ENCODE measurements at regions of chr9 and their contacts with region 1.

Region 1: DNA sequence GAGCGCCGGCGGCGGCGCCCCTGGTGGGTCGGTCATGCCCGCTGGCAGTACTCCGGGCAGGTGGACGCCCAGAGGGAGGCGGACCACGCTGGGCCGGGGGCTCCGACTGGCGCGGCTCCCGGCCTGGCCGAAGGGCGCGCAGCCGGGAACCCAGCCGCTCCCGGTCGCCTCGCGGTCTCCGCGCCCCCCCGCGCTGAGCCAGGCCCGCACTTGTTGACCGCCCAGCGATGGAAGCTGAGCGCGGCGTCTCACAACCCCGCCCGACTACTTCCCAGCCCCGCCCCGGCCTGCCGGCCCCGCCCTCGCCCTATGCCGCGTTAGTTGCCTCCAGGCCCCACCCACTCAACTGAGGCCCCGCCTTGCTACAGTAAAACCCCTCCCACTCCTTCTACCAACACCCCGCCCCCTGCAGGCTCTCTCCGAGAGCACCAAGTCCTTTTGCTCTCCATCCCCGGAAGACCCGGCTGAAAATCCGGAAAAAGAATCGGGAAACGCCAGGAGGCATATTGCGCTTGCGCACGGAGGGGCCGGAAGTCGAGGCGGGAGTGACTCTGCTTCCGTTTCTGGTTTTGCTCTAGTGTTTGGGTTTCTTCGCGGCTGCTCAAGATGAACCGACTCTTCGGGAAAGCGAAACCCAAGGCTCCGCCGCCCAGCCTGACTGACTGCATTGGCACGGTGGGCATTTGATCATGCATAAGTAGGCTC is at the starts of genes BAG1 and CHMP5:
- DNase-seq: peak; percentile 99 to 100 (median 100)
- H3K4me3 ChIP-seq: peak within 1 kb of the TSS; percentile 71 to 85
- H3K4me3 Mint-ChIP-seq: peak within 1 kb of the TSS; percentile 95 to 100 (median 97)
- H3K27ac ChIP-seq: peak within 1 kb of the TSS; percentile 76
- H3K27ac Mint-ChIP-seq: peak within 1 kb of the TSS; percentile 90 to 99 (median 98)
- H3K4me1 ChIP-seq: peaks cover 38% of the 10 kb centered on the region
- H3K4me1 Mint-ChIP-seq: peaks cover 38 to 53% (median 44%) of the 10 kb centered on the region in 4 donors
- H3K27me3 ChIP-seq: no peaks in the 10 kb centered on the region
- H3K27me3 Mint-ChIP-seq: no peaks in the 10 kb centered on the region
- total RNA-seq, gene BAG1: 53.5 to 56.3 TPM
- total RNA-seq, gene CHMP5: 32.3 to 35.0 TPM

Region 2: GRCh38 chr9:32550562-32551433 is 713.8 kb before region 1 on chr9:
- CTCF ChIA-PET with region 1: no interaction called
- POLR2A ChIA-PET with region 1: no interaction called
- intact Hi-C with region 1: loop called (anchors 2 kb)
- DNase-seq: peak; percentile 95 to 99 (median 95)
- H3K4me3 ChIP-seq: peak overlapping the region; percentile 93 to 98
- H3K4me3 Mint-ChIP-seq: peak overlapping the region; percentile 92 to 99 (median 97)
- H3K27ac ChIP-seq: peak overlapping the region; percentile 88
- H3K27ac Mint-ChIP-seq: peak overlapping the region; percentile 92 to 100 (median 98)
- H3K4me1 ChIP-seq: peaks cover 47% of the 10 kb centered on the region
- H3K4me1 Mint-ChIP-seq: peaks cover 28 to 66% (median 49%) of the 10 kb centered on the region in 4 donors
- H3K27me3 ChIP-seq: no peaks in the 10 kb centered on the region
- H3K27me3 Mint-ChIP-seq: no peaks in the 10 kb centered on the region

Region 3: DNA sequence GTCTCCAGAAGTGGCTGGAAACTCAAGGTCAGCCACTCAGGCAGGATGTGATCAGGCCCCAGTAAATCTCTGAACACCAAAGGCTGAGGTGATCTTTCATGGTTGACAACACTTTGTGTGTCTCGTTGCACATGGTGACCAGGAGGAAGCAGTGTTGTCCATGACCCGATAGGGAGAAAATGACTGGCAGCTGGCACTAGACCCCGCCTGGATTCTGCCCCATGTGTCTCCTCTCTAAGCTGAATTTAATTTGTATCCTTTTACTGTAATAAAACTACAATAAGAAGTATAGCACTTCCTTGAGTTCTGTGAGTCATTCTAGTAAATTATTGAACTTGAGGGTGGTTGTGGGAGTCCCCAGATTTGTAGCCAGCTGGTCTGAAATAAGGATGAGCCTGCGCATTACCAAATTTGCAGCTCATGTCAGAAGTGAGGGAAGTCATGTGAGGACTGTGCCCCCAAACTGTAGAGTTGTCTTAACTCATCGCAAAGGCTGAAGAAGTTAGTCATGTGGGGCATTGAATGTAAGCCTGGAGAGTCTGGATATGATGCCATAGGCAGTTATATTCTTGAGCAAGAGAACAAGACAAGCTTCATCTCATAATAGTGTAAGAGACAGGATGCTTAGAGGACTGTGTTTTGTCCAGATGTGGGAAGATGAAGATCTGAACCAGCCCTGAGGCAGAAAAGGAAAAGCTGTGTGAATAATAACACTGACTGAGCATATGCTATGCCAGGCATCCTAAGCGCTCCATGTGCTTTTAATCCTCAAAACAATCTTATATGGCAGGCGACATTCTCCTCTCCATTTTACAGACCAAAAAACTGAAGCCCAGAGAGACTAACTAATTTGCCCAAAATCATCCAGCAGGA is 425.4 kb before region 1 on chr9:
- CTCF ChIA-PET with region 1: no interaction called
- POLR2A ChIA-PET with region 1: no interaction called
- intact Hi-C with region 1: no loop called
- DNase-seq: no peak
- H3K4me3 ChIP-seq: no peak overlapping the region
- H3K4me3 Mint-ChIP-seq: no peak overlapping the region
- H3K27ac ChIP-seq: no peak overlapping the region
- H3K27ac Mint-ChIP-seq: no peak overlapping the region
- H3K4me1 ChIP-seq: no peaks in the 10 kb centered on the region
- H3K4me1 Mint-ChIP-seq: no peaks in the 10 kb centered on the region
- H3K27me3 ChIP-seq: no peaks in the 10 kb centered on the region
- H3K27me3 Mint-ChIP-seq: peaks cover 4 to 9% of the 10 kb centered on the region in 2 donors

Region 4: GRCh38 chr9:33350310-33350709 is 85.7 kb after region 1 on chr9:
- CTCF ChIA-PET with region 1: no interaction called
- POLR2A ChIA-PET with region 1: no interaction called
- intact Hi-C with region 1: no loop called
- DNase-seq: no peak
- H3K4me3 ChIP-seq: no peak overlapping the region
- H3K4me3 Mint-ChIP-seq: no peak overlapping the region
- H3K27ac ChIP-seq: no peak overlapping the region
- H3K27ac Mint-ChIP-seq: peak overlapping the region in 1 of 7 donors; percentile 50
- H3K4me1 ChIP-seq: no peaks in the 10 kb centered on the region
- H3K4me1 Mint-ChIP-seq: peaks cover 0 to 3% (median 0%) of the 10 kb centered on the region in 4 donors
- H3K27me3 ChIP-seq: no peaks in the 10 kb centered on the region
- H3K27me3 Mint-ChIP-seq: no peaks in the 10 kb centered on the region

Measured in CD4-positive, alpha-beta memory T cell (primary cell).